ENCODE measurements at regions of chr2 and their contacts with region 1.

Region 1: DNA sequence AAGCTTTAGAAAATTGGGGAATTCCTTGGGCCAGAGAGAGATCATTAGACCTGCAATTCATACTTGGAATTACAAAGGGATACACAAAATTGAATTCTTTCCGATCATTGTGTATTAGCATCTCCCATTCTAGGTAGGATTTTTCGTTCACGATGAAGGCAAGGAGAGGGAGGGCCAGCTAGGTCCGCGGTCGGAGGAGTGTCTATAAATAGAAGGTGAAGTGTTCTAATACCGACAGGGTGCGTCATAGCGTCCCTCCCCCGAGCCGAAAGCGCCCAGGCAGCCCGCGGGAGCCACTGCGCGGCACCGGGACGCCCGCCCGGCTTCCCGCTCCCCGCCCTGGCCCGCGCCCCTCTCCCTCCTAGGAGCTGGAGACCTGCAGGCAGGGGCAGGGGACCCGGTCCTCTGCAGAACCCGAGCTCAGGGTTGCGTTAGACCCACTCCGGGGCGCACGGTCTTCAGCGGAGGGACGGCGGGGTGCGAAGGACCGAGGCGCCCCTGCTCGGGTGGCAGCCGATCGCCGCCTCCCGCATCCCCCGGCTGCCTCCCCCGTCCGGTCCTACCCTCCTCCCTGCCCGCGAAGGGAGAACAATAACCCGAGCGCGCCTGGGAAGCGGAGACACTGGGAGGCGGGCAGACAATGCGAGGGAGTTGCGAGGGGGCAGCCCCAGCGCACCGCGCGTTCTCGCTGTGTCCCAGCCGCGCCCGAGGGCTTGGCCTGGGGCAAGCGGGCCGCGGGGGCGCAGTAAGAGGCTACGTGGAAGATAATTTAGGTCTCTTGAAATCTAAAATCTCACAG is 114.2 kb upstream of the SERTAD2 start:
- DNase-seq: peak; percentile 91
- ATAC-seq: peak; percentile 94 to 96

Region 2: DNA sequence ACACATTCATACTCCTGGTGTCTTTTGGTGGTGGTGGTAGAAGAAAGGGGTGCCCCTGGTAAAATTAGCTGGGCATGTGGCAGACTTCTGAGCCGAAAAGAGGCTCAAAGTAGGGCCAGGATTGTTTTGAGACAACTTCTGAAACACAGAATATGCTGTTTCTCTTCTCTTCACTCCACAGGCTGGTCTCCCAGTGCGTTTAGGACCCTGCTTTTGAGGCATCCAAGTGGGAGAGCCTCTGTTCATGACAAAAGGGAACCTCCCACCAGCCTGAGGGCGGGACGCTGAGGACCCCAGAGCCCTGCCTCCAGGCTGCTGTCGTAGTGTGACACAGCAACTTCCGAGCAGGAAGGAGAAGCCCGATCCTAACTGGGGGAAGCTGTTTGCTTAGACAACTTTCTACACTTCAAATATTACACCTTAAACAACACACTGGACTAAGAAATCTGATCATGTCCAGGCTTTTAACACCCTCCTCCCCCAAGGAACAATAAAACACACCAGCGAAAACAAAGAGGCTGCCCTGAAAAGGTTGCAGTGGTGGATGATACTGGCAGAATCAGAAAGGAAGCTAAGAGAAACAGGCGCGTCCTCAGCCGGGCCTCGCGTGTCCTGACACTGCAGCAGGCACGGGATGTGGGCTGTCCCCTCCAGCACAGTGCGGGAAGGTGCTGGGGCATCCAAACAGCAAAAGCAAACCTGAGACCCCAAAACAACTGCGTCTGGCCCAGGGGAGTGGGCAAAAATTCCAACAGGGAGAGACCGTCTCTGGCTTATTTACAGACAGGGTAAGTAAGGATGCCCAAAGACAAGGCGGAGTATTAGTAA is 123.5 kb before region 1 on chr2:
- intact Hi-C with region 1: loop called in 1 of 2 experiments (anchors 5 kb)
- DNase-seq: peak; percentile 89
- ATAC-seq: peak; percentile 92 to 93

Region 3: DNA sequence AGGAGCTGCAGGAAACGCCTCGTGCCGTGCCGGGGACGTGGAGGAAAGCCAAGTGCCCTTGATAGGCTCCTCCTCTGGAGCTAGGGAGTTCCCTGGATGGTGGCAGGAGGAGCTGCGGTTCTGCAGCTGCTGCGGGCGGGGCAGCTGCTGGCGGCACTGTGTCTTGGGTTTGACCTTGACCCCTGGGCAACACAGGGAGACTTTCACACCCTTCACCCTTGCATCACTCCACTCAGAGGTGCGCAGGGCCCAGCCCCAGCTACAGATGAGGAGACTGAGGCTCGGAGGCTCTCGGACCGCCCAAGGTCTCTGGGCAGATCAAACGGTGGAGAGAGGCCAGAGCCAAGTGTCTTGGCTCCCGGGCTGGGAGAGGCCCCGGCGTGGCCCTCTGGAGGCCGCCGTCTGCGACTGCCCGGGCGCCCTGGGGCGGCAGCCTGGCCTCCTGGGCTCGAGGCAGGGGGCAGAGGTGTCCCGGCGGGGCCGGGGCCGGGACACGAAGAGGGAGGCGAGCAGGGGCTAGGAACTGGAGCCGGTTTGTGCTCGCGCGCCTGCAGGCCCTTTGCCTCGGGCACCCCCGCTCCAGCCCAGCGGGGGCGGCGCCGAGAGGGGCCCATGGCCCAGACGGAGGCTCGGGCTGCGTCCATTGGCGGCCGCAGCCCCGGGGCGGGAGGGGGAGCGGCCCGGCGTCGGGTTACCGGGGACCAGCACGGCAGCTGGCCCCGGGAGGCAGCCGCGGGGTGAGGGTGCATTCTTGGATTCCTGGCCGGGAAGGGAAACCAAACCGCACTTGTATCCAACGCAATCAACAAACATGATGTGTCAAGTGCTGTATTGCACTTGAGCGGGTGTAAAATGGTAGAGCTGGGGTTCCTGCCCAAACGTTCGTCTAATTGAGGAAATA is 91.7 kb after region 1 on chr2:
- intact Hi-C with region 1: loop called in 1 of 2 experiments (anchors 5 kb)
- DNase-seq: peak; percentile 91
- ATAC-seq: peak; percentile 86 to 89